ENCODE measurements at regions of chr1 and their contacts with region 1.

Region 1: GRCh38 chr1:160261893-160262794 is at the start of gene DCAF8:
- DNase-seq: peak; percentile 95 to 99 (median 96)
- H3K4me3 ChIP-seq: peak within 1 kb of the TSS; percentile 83
- H3K4me3 Mint-ChIP-seq: peak within 1 kb of the TSS; percentile 90 to 100 (median 97)
- H3K27ac ChIP-seq: peak within 1 kb of the TSS; percentile 92
- H3K27ac Mint-ChIP-seq: peak within 1 kb of the TSS; percentile 96 to 100 (median 98)
- H3K4me1 ChIP-seq: peaks cover 33% of the 10 kb centered on the region
- H3K4me1 Mint-ChIP-seq: peaks cover 36 to 56% (median 50%) of the 10 kb centered on the region in 3 donors
- H3K27me3 ChIP-seq: no peaks in the 10 kb centered on the region
- H3K27me3 Mint-ChIP-seq: peaks cover 0 to 6% of the 10 kb centered on the region in 2 donors
- total RNA-seq, gene DCAF8: 95.6 to 97.0 TPM

Region 2: GRCh38 chr1:160098852-160099561 is 163.1 kb before region 1 on chr1:
- CTCF ChIA-PET with region 1: interaction called, 7 read pairs
- POLR2A ChIA-PET with region 1: interaction called, 12 read pairs
- DNase-seq: peak; percentile 94 to 99 (median 97)
- H3K4me3 ChIP-seq: peak overlapping the region; percentile 63
- H3K4me3 Mint-ChIP-seq: peak overlapping the region; percentile 76 to 91 (median 81)
- H3K27ac ChIP-seq: peak overlapping the region; percentile 79
- H3K27ac Mint-ChIP-seq: peak overlapping the region; percentile 79 to 99 (median 96)
- H3K4me1 ChIP-seq: peaks cover 54% of the 10 kb centered on the region
- H3K4me1 Mint-ChIP-seq: peaks cover 49 to 82% (median 52%) of the 10 kb centered on the region in 3 donors
- H3K27me3 ChIP-seq: no peaks in the 10 kb centered on the region
- H3K27me3 Mint-ChIP-seq: peaks cover 0 to 2% of the 10 kb centered on the region in 2 donors

Region 3: GRCh38 chr1:160284782-160285344 is 22.7 kb after region 1 on chr1 and contains the start of gene PEX19:
- CTCF ChIA-PET with region 1: interaction called, 8 read pairs
- POLR2A ChIA-PET with region 1: interaction called, 35 read pairs
- DNase-seq: peak; percentile 88 to 95 (median 90)
- H3K4me3 ChIP-seq: peak within 1 kb of the TSS; percentile 95
- H3K4me3 Mint-ChIP-seq: peak within 1 kb of the TSS; percentile 93 to 100 (median 99)
- H3K27ac ChIP-seq: peak within 1 kb of the TSS; percentile 76
- H3K27ac Mint-ChIP-seq: peak within 1 kb of the TSS; percentile 86 to 98 (median 96)
- H3K4me1 ChIP-seq: peaks cover 26% of the 10 kb centered on the region
- H3K4me1 Mint-ChIP-seq: peaks cover 23 to 38% (median 33%) of the 10 kb centered on the region in 3 donors
- H3K27me3 ChIP-seq: no peaks in the 10 kb centered on the region
- H3K27me3 Mint-ChIP-seq: peaks cover 0 to 2% of the 10 kb centered on the region in 2 donors
- total RNA-seq, gene PEX19: 56.1 to 57.5 TPM